Activated CD4-positive, alpha-beta memory T cell treated with anti-CD3 and anti-CD28 coated beads for 36 hours (primary cell): ENCODE measurements at regions of chr17 and their contacts with region 1.

Region 1: DNA sequence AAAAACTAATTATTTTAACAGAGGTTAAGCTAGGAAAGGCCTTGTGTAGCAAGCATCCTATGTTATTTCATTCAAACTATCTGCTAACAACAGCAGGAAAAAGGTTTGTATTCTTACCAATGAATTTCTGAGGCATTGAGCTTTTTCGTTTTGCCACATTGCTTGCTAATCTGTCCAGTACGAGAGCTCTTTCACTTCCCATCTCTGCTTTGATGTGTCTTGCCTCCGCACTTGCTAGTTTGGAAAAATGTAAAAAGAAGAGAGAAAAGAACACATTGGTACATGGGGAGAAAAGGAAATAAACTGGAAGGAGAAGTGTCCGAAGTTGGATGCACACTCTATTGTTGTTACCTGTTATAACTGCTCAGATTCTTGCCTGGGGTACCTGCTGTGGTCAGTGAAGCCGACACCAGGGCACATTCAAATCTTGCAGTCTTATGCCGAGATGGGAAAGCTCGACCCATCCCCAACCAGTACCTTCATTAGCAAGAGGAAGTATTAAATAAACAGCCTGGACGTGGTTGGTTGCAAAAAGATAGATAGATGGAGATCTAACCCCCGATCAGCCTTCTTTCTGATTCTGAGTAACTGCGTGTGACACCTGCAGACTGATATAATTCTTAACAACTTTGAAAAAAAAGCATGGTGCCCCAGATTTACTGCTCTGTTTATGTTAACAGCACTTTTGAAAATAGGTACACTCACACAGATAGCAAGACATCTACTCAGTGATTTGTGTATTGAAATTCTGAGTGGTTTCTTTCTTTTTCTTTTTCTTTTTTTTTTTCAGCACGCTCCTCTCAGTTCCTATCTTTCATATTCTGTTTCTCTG is 40.0 kb downstream of the GRB7 start:
- DNase-seq: no peak
- H3K4me3 Mint-ChIP-seq: peak overlapping the region; percentile 80
- H3K27ac Mint-ChIP-seq: peak overlapping the region; percentile 88
- H3K4me1 Mint-ChIP-seq: peaks cover 84% of the 10 kb centered on the region
- H3K27me3 Mint-ChIP-seq: no peaks in the 10 kb centered on the region

Region 2: GRCh38 chr17:39813631-39814030 is 35.9 kb after region 1 on chr17:
- CTCF ChIA-PET with region 1: no interaction called
- POLR2A ChIA-PET with region 1: interaction called, 6 read pairs
- intact Hi-C with region 1: loop called (anchors 2 kb)
- DNase-seq: peak; percentile 64
- H3K4me3 Mint-ChIP-seq: peak overlapping the region; percentile 70
- H3K27ac Mint-ChIP-seq: peak overlapping the region; percentile 89
- H3K4me1 Mint-ChIP-seq: peaks cover 70% of the 10 kb centered on the region
- H3K27me3 Mint-ChIP-seq: no peaks in the 10 kb centered on the region